ENCODE measurements at regions of chr15 and their contacts with region 1.

Region 1: GRCh38 chr15:82709421-82710207 is at the start of gene AP3B2:
- DNase-seq: peak; percentile 49 to 83
- H3K4me3 ChIP-seq: peak within 1 kb of the TSS; percentile 39 to 99 (median 58)
- H3K27ac ChIP-seq: peak within 1 kb of the TSS; percentile 14; the same call in 1 of the 2 replicates
- H3K4me1 ChIP-seq: peaks cover 0 to 13% (median 5%) of the 10 kb centered on the region in 4 experiments; a peak in 6 of 7 replicates
- H3K27me3 ChIP-seq: peaks cover 0 to 7% (median 1%) of the 10 kb centered on the region in 4 experiments; a peak in 3 of 7 replicates
- CTCF ChIP-seq: no peak
- EP300 ChIP-seq: no peak
- POLR2A ChIP-seq: peak in 1 of 2 experiments; percentile 55; a peak in 1 of 3 replicates
- RAD21 ChIP-seq: no peak; a peak in 2 of 4 replicates
- total RNA-seq, gene AP3B2: 23.6 and 25.7 TPM in 2 replicates

Region 2: DNA sequence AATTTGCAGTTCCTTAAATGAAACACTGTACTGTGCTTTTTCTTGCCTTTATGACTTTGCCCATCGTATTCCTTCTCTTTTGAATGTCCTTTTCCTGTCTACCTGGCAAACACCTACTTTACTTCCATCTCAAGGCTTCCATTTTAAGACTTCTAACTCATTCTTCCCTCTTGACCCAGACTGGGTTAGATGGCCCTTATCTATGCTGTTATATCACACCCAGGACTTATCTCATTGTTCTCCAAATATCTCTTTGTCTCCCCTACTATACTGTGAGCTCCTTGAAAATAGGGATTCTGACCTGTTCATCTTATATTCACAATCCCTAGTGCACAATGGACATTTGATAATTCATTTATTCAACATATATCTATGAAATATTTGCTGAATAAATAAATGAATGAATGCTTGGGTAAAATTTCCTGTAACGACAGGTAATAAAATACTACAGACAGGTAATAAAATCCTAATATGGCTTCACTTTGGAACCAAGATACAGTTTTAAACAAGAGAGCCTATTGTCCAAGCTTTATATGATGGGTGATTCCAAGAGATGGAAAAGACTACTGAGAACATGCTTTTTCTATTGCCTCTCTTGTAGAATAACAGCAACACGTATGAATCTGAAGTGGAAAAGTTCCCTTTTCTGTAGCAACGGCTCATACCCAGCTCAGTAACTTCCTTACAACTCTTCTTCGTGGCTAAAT is 469.8 kb before region 1 on chr15:
- CTCF ChIA-PET with region 1: no interaction called
- POLR2A ChIA-PET with region 1: no interaction called
- DNase-seq: no peak
- H3K4me3 ChIP-seq: no peak overlapping the region
- H3K27ac ChIP-seq: no peak overlapping the region
- H3K4me1 ChIP-seq: no peaks in the 10 kb centered on the region
- H3K27me3 ChIP-seq: no peaks in the 10 kb centered on the region
- CTCF ChIP-seq: no peak
- EP300 ChIP-seq: no peak
- POLR2A ChIP-seq: no peak
- RAD21 ChIP-seq: no peak

Region 3: DNA sequence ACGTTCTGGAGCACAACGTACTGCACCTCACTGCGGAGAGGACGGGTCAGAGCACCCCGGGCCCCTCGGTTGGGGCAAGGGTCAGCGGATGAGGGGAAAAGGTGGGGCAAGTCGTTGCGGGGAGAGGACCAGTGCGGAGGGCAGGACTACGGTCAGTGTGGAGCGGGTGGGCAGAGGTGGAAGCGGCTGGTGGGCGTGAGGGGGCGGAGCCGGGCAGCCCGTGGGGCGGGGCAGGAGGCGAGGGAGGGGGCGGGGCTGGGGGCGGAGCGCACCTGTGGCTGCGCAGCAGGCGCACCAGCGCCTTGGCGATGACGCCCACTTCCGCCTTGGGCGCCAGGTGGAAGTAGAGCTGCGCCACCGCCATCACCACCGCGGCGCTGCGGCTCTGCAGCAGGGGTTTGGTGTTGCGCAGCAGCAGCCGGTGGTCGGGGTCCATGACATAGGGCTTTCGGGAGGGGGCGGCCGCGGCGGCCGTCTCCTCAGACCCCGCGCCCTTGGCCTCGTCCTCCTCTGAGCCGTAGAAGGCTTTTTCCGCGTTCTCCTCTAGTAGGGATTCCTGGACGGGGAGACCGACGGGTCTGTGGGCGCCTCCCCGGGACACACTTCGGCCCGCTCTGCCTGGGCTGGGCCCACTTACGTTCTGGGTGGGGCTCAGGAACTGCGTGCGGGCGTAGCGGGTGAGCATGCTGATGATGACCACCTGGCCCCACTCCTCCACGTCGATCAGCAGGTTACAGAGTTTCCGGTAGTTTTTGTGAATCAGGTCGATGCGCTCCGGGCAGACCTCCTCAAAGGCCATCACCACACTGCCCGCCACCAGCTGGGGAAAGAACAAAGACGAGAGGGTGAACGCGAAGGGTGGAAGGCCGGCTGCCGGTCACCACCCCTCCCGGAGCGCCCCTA is 29.2 kb before region 1 on chr15:
- CTCF ChIA-PET with region 1: interaction called, 6 read pairs
- POLR2A ChIA-PET with region 1: interaction called, 12 read pairs
- DNase-seq: peak; percentile 82 to 88
- H3K4me3 ChIP-seq: peak overlapping the region; percentile 61 to 76 (median 71)
- H3K27ac ChIP-seq: peak overlapping the region; percentile 76
- H3K4me1 ChIP-seq: peaks cover 0 to 8% (median 3%) of the 10 kb centered on the region in 4 experiments; a peak in 4 of 7 replicates
- H3K27me3 ChIP-seq: peaks cover 0 to 10% (median 3%) of the 10 kb centered on the region in 4 experiments; a peak in 4 of 7 replicates
- CTCF ChIP-seq: peak; percentile 52 to 65 (median 55)
- EP300 ChIP-seq: no peak
- POLR2A ChIP-seq: peak; percentile 87 to 88
- RAD21 ChIP-seq: peak; percentile 65 to 70

Region 4: DNA sequence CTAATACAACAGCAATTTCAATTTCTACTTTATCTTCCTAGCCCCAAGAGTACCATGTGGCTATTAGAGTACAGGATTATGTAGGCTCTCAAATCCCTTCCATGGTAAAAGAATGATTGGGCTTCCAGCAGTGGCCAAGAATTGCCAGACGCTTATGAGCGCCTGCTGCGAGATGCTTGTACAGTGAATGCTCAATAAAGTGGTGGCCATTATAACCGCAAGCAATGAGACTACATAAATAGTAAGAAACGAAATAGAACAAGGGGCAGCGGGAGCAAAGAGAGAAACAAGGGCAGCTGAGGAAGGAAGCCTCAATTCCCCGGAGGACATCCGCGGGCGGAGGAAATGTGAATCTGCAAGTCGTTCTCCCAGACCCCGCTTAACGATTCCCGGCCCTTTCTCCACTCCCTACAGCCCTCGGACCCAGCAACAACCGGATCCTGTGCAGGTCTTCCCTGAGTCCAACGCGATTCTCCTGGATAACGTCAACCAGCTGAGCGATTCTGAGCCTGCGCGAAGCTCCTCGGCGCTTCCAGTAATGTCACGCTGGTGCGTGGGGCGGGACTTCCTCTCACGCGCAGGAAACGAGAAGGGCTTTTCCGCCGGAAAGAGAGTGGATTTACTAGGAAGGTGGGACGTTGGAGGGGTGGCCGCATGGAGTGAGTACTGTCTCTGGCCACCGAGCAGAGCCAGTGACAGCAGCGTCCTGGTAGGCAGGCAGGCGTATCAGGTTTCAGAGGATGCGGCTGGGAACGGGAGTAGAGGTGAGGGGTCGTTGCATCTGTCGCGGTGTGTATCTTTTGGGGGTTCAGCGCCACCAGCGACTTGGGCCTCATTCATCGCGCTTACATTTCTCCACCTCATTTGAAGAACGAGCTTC is 40.6 kb after region 1 on chr15:
- CTCF ChIA-PET with region 1: interaction called, 3 read pairs
- POLR2A ChIA-PET with region 1: interaction called, 25 read pairs
- DNase-seq: peak; percentile 77 to 82
- H3K4me3 ChIP-seq: peak overlapping the region; percentile 72 to 86 (median 83)
- H3K27ac ChIP-seq: peak overlapping the region; percentile 49; the same call in 1 of the 2 replicates
- H3K4me1 ChIP-seq: peaks cover 0 to 5% (median 2%) of the 10 kb centered on the region in 4 experiments; a peak in 3 of 7 replicates
- H3K27me3 ChIP-seq: no peaks in the 10 kb centered on the region
- CTCF ChIP-seq: no peak
- EP300 ChIP-seq: no peak
- POLR2A ChIP-seq: peak; percentile 47 to 77
- RAD21 ChIP-seq: no peak

Measured in H1 (cell line).